HCT116 (cell line): ENCODE measurements at regions of chr9 and their contacts with region 1.

Region 1: DNA sequence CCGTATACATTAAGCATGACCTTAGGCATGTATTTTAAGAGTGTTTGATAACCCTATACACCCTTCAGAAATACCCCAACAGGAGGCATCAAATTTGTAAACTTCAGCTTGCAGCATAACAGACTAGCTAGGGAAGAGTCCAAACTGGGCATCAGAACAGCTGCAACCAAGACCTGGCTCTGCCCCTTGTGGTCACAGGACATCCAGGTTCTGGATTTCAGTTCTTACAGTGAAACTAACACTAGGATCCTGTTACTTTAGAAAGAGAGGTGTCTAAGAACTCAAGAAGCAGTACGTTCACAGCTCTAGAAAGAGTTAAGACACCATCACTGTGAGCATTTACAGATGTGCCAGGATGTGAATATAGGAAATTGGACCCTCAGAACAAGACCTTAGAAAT is 229.8 kb downstream of the BNC2 start:
- DNase-seq: no peak
- ATAC-seq: no peak
- H3K4me3 ChIP-seq: no peak overlapping the region
- H3K27ac ChIP-seq: no peak overlapping the region
- H3K4me1 ChIP-seq: no peaks in the 10 kb centered on the region
- H3K27me3 ChIP-seq: peaks cover 3% of the 10 kb centered on the region; the same call in 1 of the 2 replicates
- CTCF ChIP-seq: 0 out of 6 replicates have a peak, but pooled peaks of 1 of the 3 experiments have one; percentile 15
- POLR2A ChIP-seq: no peak
- RAD21 ChIP-seq: no peak

Region 2: DNA sequence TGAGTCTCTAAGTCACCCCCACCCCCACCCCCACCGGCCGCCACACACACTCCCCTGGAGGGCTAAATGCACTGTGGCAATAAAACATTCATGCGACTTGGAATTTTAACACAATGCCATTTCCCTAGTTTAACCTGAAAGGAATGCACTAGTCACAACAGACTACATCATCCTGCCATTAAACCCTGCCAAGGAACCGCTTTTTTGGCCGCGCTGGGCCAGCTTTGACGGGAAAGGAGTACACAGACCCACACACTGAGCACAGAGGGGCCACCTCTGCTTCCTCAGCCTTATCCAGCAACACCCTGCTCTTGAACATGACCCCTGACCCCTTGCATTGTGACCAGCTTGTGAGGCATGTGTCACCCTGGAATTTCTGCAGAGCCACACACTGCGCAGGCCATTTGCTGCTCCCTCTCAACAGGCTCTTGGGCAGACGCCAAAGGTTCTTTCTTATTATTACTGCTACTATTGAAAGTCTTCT is 64.5 kb after region 1 on chr9:
- CTCF ChIA-PET with region 1: no interaction called
- POLR2A ChIA-PET with region 1: no interaction called
- RAD21 ChIA-PET with region 1: no interaction called
- intact Hi-C with region 1: loop called (anchors 10 kb)
- DNase-seq: no peak
- ATAC-seq: no peak
- H3K4me3 ChIP-seq: no peak overlapping the region
- H3K27ac ChIP-seq: no peak overlapping the region
- H3K4me1 ChIP-seq: no peaks in the 10 kb centered on the region
- H3K27me3 ChIP-seq: no peaks in the 10 kb centered on the region
- CTCF ChIP-seq: no peak
- POLR2A ChIP-seq: no peak
- RAD21 ChIP-seq: no peak